PC-3 (cell line): ENCODE measurements at regions of chr7 and their contacts with region 1.

Region 1: GRCh38 chr7:121558288-121558687 is 162.2 kb upstream of the FAM3C start:
- DNase-seq: no peak
- ATAC-seq: no peak
- H3K4me3 ChIP-seq: no peak overlapping the region
- H3K27ac ChIP-seq: no peak overlapping the region
- H3K4me1 ChIP-seq: 0 out of 2 replicates have a peak, but pooled peaks cover 6% of the 10 kb centered on the region
- H3K27me3 ChIP-seq: no peaks in the 10 kb centered on the region
- CTCF ChIP-seq: no peak

Region 2: GRCh38 chr7:121132940-121133339 is 425.3 kb before region 1 on chr7:
- CTCF ChIA-PET with region 1: no interaction called
- POLR2A ChIA-PET with region 1: no interaction called
- intact Hi-C with region 1: loop called (anchors 5 kb)
- DNase-seq: no peak
- ATAC-seq: no peak
- H3K4me3 ChIP-seq: no peak overlapping the region
- H3K27ac ChIP-seq: no peak overlapping the region
- H3K4me1 ChIP-seq: no peaks in the 10 kb centered on the region
- H3K27me3 ChIP-seq: no peaks in the 10 kb centered on the region
- CTCF ChIP-seq: no peak

Region 3: GRCh38 chr7:121605317-121605680 is 47.0 kb after region 1 on chr7:
- CTCF ChIA-PET with region 1: no interaction called
- POLR2A ChIA-PET with region 1: no interaction called
- intact Hi-C with region 1: no loop called
- DNase-seq: peak; percentile 12
- ATAC-seq: peak; percentile 83
- H3K4me3 ChIP-seq: no peak overlapping the region
- H3K27ac ChIP-seq: no peak overlapping the region
- H3K4me1 ChIP-seq: no peaks in the 10 kb centered on the region
- H3K27me3 ChIP-seq: peaks cover 37% of the 10 kb centered on the region
- CTCF ChIP-seq: peak; percentile 25; the same call in 1 of the 2 replicates